ENCODE measurements at regions of chr11 and their contacts with region 1.

Region 1: DNA sequence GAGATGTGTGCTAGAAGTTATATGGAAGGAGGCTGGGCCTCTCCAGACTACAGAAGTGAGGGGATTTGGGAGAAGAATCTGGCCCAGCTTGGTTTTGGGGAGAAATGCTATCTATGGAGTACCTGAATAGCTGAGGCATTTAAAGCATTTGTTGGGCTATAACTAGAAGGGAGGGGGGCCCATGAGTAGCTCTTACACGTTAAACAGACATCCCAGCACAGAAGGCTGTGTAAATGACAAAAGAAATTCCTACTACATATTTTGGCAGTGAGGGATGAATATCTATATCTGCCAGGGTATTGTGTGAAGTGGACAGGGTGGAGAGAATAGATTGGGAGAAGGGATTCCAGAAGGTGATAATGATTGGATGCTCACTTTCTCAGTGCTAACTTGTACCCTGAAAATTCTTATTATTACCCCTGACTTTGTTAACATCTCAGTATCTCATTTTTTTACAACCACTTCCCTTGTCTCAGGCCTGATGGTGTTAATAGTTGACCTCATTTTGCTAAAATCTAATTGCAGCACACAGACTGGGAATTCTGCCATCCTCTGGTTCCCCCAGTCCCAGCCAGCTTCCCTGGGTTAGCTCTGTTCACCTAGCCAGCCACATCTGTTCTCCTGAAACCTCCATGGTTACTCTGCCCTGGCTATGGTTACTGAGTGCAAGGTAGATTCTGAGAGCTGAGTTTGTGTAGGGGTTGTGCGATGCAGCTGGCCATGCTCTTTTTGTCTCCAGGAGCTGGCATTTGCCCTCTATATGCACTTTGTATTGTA is 28.8 kb upstream of the RRM1 start:
- DNase-seq: no peak
- ATAC-seq: no peak
- H3K4me3 Mint-ChIP-seq: no peak overlapping the region
- H3K27ac Mint-ChIP-seq: peak overlapping the region; percentile 63
- H3K4me1 Mint-ChIP-seq: peaks cover 59% of the 10 kb centered on the region
- H3K27me3 Mint-ChIP-seq: no peaks in the 10 kb centered on the region

Region 2: DNA sequence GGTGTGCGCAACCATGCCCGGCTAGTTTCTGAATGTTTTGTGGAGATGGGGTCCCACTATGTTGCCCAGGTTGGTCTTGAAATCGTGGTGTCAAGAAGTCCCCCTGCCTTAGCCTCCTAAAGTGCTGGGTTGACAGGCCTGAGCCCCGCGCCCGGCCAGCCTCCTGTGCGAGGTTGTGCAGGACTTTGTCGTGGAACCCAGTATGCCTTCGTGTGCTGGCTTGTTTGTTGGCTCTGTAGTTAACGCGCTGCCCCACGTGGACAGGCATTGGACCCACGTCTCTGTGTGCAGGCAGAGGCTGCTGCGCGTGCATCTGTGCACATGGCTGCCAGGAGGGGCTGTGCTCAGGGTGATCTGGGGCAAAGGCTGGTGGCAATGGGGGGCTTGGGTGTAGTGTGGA is 653.0 kb before region 1 on chr11:
- CTCF ChIA-PET with region 1: no interaction called
- POLR2A ChIA-PET with region 1: no interaction called
- intact Hi-C with region 1: no loop called
- DNase-seq: no peak
- ATAC-seq: no peak
- H3K4me3 Mint-ChIP-seq: no peak overlapping the region
- H3K27ac Mint-ChIP-seq: no peak overlapping the region
- H3K4me1 Mint-ChIP-seq: peaks cover 5% of the 10 kb centered on the region
- H3K27me3 Mint-ChIP-seq: no peaks in the 10 kb centered on the region

Region 3: DNA sequence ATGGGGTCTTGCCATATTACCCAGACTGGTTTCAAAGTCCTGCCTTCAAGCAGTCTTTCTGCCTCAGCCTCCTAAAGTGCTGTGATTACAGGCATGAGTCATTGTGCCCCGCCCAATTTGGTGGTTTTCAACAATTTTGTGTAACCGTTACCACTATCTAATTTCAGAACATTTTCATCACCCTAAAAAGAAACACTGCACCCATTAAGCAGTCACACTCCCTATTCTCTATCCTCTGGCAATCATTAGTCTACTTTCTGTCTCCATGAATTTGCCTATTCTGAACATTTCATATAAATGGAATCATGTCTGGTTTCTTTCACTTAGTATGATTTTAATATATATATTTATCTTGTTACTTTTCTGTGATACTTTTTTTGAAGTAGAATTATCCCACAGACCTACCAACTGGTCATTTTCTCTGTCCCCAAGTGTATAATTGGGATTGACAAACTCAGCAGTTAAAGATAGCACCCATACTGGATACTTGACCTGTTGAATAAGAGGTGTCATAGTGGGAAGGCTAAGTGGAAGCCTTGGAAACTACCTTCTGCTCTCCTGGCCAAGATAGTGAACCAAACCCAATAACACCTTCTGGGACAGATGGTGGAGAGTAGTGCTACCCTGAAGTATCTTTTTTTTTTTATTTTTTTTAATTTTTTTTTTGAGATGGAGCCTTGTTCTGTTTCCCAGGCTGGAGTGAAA is 145.5 kb before region 1 on chr11:
- CTCF ChIA-PET with region 1: no interaction called
- POLR2A ChIA-PET with region 1: no interaction called
- intact Hi-C with region 1: no loop called
- DNase-seq: peak; percentile 88
- ATAC-seq: peak; percentile 71
- H3K4me3 Mint-ChIP-seq: no peak overlapping the region
- H3K27ac Mint-ChIP-seq: peak overlapping the region; percentile 55
- H3K4me1 Mint-ChIP-seq: peaks cover 65% of the 10 kb centered on the region
- H3K27me3 Mint-ChIP-seq: no peaks in the 10 kb centered on the region

Region 4: DNA sequence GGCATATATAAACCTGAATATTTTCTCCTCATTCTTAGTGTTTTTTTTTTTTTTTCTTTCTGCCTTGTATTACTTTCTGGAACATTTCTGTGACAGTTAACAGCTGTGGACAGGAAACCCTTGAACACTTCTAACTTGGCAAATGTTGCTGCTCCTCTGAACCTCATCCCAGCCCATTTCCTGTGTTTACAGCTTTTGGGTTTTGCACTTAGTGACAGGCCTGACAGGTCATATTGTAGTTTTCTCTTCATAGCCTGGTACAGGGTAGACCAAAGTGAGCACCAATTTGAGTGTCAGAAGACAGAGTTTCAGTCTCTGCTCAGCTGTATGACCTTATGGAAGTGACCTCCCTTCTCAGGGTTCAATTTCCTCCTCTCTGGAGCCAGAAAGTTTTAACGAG is 118.7 kb before region 1 on chr11:
- CTCF ChIA-PET with region 1: interaction called, 4 read pairs
- POLR2A ChIA-PET with region 1: no interaction called
- intact Hi-C with region 1: loop called in 1 of 2 experiments (anchors 5 kb)
- DNase-seq: peak; percentile 60
- ATAC-seq: peak; percentile 85
- H3K4me3 Mint-ChIP-seq: peak overlapping the region; percentile 34
- H3K27ac Mint-ChIP-seq: peak overlapping the region; percentile 88
- H3K4me1 Mint-ChIP-seq: peaks cover 94% of the 10 kb centered on the region
- H3K27me3 Mint-ChIP-seq: no peaks in the 10 kb centered on the region

Region 5: DNA sequence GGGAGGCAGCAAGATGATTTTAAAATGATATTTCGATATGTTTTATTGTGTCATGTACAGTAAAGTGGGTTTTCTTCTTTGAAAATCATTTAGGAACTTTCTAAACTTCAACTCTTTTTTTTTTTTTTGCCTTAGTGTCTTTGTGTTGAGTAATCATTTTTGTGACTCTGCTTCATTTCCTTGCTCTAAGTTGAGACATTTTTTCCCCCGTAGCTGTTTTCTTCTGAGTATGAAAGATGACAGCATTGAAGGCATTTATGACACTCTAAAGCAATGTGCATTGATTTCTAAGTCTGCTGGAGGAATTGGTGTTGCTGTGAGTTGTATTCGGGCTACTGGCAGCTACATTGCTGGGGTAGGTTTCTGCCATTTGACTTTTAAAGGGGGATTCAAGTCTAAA is 52.3 kb after region 1 on chr11:
- CTCF ChIA-PET with region 1: no interaction called
- POLR2A ChIA-PET with region 1: no interaction called
- intact Hi-C with region 1: no loop called
- DNase-seq: no peak
- ATAC-seq: peak; percentile 68
- H3K4me3 Mint-ChIP-seq: no peak overlapping the region
- H3K27ac Mint-ChIP-seq: peak overlapping the region; percentile 58
- H3K4me1 Mint-ChIP-seq: peaks cover 11% of the 10 kb centered on the region
- H3K27me3 Mint-ChIP-seq: no peaks in the 10 kb centered on the region

Measured in activated CD4-positive, alpha-beta T cell treated with anti-CD3 and anti-CD28 coated beads for 36 hours (primary cell).